K562 (cell line): ENCODE measurements at regions of chr1 and their contacts with region 1.

Region 1: GRCh38 chr1:109984456-109985275 is at the start of gene AHCYL1:
- DNase-seq: peak; percentile 100
- ATAC-seq: peak; percentile 97
- H3K4me3 ChIP-seq: peak within 1 kb of the TSS; percentile 86
- H3K27ac ChIP-seq: peak within 1 kb of the TSS; percentile 91
- H3K4me1 ChIP-seq: peaks cover 26 to 46% of the 10 kb centered on the region in 2 experiments
- H3K27me3 ChIP-seq: no peaks in the 10 kb centered on the region
- CTCF ChIP-seq: peak; percentile 96 to 99 (median 99)
- EP300 ChIP-seq: no peak; the same call in 1 of the 2 replicates
- POLR2A ChIP-seq: peak; percentile 95
- RAD21 ChIP-seq: peak; percentile 100
- polyA plus RNA-seq, gene AHCYL1: 27.3 to 32.9 TPM

Region 2: GRCh38 chr1:109548321-109549267 is 436.1 kb before region 1 on chr1 and contains the start of gene GNAI3:
- CTCF ChIA-PET with region 1: interaction called, 8 read pairs
- POLR2A ChIA-PET with region 1: interaction called, 8 read pairs
- in situ Hi-C with region 1: loop called (anchors 5 kb)
- intact Hi-C with region 1: loop called (anchors 5 kb)
- DNase-seq: peak; percentile 92 to 99 (median 94)
- ATAC-seq: peak; percentile 96
- H3K4me3 ChIP-seq: peak within 1 kb of the TSS; percentile 94
- H3K27ac ChIP-seq: peak within 1 kb of the TSS; percentile 91
- H3K4me1 ChIP-seq: peaks cover 4 to 5% of the 10 kb centered on the region in 2 experiments
- H3K27me3 ChIP-seq: no peaks in the 10 kb centered on the region
- CTCF ChIP-seq: no peak; a peak in 1 of 6 replicates
- EP300 ChIP-seq: no peak
- POLR2A ChIP-seq: peak; percentile 98
- RAD21 ChIP-seq: no peak; a peak in 2 of 4 replicates
- polyA plus RNA-seq, gene GNAI3: 6.9 to 8.0 TPM

Region 3: DNA sequence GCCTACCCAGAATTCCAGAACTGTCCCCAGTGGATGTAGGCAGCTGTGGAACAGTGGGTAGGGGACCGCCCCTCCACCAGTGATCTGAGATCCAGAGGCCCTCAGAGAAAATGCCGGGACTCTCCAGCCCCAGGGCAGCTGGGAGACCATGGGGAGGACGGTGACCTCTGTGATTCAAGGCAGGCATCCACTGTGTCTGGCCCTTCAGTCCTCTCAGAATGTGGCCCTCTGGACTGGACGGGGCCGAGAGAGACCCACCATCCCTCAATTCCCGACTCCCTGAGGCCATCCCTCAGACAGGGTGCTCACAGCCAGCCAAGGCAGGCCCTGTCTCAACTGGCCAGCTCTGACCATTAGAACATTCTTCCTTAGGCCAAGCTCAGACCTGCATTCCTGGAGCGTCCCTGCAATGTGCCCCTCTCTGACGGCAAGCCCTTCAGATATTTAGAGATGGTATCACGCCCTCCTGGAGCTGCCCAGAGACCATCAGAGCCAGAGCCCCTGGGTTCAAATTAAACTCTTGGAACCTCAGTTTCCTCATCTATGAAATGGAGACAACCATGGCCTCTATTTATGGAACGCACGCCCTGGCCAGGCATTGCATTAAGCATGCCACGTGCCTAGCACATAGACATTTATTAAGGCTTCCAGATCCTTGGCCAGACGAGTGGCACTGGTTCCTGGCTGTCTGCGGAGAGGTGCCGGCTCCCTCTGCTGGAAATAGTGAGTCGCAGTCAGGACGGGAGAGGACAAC is 211.3 kb before region 1 on chr1:
- CTCF ChIA-PET with region 1: interaction called, 202 read pairs
- POLR2A ChIA-PET with region 1: interaction called, 99 read pairs
- in situ Hi-C with region 1: loop called (anchors 5 kb)
- intact Hi-C with region 1: loop called (anchors 1 kb)
- DNase-seq: peak; percentile 67 to 90 (median 76)
- ATAC-seq: peak; percentile 95
- H3K4me3 ChIP-seq: no peak overlapping the region
- H3K27ac ChIP-seq: no peak overlapping the region
- H3K4me1 ChIP-seq: peaks cover 11 to 12% of the 10 kb centered on the region in 2 experiments; a peak in 3 of 5 replicates
- H3K27me3 ChIP-seq: peaks cover 2 to 23% of the 10 kb centered on the region in 2 experiments; a peak in 3 of 5 replicates
- CTCF ChIP-seq: peak; percentile 97 to 99 (median 98)
- EP300 ChIP-seq: no peak
- POLR2A ChIP-seq: no peak
- RAD21 ChIP-seq: peak; percentile 100

Region 4: DNA sequence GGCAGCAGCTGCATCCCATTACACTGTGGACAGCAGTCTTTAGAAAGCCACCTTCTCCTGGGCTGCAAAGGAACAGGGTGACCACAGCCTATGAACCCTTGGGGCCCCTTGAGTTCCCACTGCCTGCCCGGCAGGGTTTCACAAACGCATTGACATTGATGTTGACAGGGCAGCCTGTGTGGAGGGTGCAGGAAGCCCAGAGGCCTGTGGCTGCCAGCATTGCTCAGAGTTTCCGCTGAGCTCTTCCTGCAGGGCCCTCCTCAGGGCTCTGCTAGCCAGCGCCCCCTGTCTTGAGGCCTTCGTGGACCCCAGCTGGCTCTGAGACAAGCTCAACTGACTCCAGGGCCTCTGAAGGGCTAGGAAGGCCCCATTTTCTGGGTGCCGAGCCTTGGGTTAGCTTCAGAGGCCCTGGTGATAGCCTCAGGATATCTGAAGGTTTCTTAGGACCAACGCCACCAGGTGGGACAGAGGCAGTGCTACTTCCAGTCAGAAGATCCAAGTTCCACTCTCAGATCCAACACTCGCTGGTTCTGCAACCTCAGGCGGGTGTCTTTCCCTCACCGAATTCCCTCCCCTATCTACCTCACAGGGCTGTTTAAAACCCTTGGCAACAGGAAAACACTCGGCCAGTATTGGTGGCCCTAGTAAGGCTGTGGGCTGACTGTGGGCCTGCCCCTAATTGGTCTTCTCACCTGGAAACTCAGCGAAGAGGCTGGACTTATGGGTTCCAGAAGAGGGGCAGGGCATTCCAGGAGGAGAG is 193.8 kb before region 1 on chr1:
- CTCF ChIA-PET with region 1: interaction called, 4 read pairs
- POLR2A ChIA-PET with region 1: interaction called, 8 read pairs
- in situ Hi-C with region 1: no loop called
- intact Hi-C with region 1: loop called (anchors 1 kb)
- DNase-seq: peak; percentile 66 to 80 (median 74)
- ATAC-seq: peak; percentile 62
- H3K4me3 ChIP-seq: no peak overlapping the region
- H3K27ac ChIP-seq: peak overlapping the region; percentile 26; the same call in 2 of the 3 replicates
- H3K4me1 ChIP-seq: peaks cover 65 to 66% of the 10 kb centered on the region in 2 experiments
- H3K27me3 ChIP-seq: no peaks in the 10 kb centered on the region
- CTCF ChIP-seq: peak; percentile 70 to 85 (median 75)
- EP300 ChIP-seq: no peak
- POLR2A ChIP-seq: no peak
- RAD21 ChIP-seq: peak; percentile 62 to 67

Region 5: GRCh38 chr1:109910123-109910962 is 74.3 kb before region 1 on chr1 and contains the start of gene CSF1:
- CTCF ChIA-PET with region 1: interaction called, 3 read pairs
- POLR2A ChIA-PET with region 1: interaction called, 10 read pairs
- in situ Hi-C with region 1: loop called (anchors 5 kb)
- intact Hi-C with region 1: no loop called
- DNase-seq: peak; percentile 85 to 92 (median 90)
- ATAC-seq: peak; percentile 82
- H3K4me3 ChIP-seq: peak within 1 kb of the TSS; percentile 52
- H3K27ac ChIP-seq: peak within 1 kb of the TSS; percentile 64
- H3K4me1 ChIP-seq: peaks cover 30 to 37% of the 10 kb centered on the region in 2 experiments
- H3K27me3 ChIP-seq: no peaks in the 10 kb centered on the region
- CTCF ChIP-seq: no peak
- EP300 ChIP-seq: 0 out of 2 replicates have a peak, but pooled peaks have one; percentile 17
- POLR2A ChIP-seq: peak; percentile 60
- RAD21 ChIP-seq: no peak; a peak in 1 of 4 replicates
- polyA plus RNA-seq, gene CSF1: 0.18 to 0.23 TPM

Region 6: GRCh38 chr1:109931189-109931731 is 53.4 kb before region 1 on chr1:
- CTCF ChIA-PET with region 1: no interaction called
- POLR2A ChIA-PET with region 1: interaction called, 3 read pairs
- in situ Hi-C with region 1: no loop called
- intact Hi-C with region 1: loop called (anchors 5 kb)
- DNase-seq: peak; percentile 67 to 90 (median 82)
- ATAC-seq: peak; percentile 97
- H3K4me3 ChIP-seq: no peak overlapping the region
- H3K27ac ChIP-seq: peak overlapping the region; percentile 67; the same call in 2 of the 3 replicates
- H3K4me1 ChIP-seq: peaks cover 15 to 24% of the 10 kb centered on the region in 2 experiments; a peak in 4 of 5 replicates
- H3K27me3 ChIP-seq: no peaks in the 10 kb centered on the region
- CTCF ChIP-seq: no peak
- EP300 ChIP-seq: peak; percentile 49
- POLR2A ChIP-seq: 0 out of 2 replicates have a peak, but pooled peaks have one; percentile 24
- RAD21 ChIP-seq: peak in 1 of 2 experiments; percentile 29; a peak in 1 of 4 replicates

Region 7: GRCh38 chr1:110011527-110012041 is 26.9 kb after region 1 on chr1:
- CTCF ChIA-PET with region 1: interaction called, 3 read pairs
- POLR2A ChIA-PET with region 1: interaction called, 4 read pairs
- in situ Hi-C with region 1: no loop called
- intact Hi-C with region 1: loop called (anchors 1 kb)
- DNase-seq: peak; percentile 56 to 70 (median 62)
- ATAC-seq: peak; percentile 97
- H3K4me3 ChIP-seq: no peak overlapping the region
- H3K27ac ChIP-seq: no peak overlapping the region
- H3K4me1 ChIP-seq: no peaks in the 10 kb centered on the region
- H3K27me3 ChIP-seq: no peaks in the 10 kb centered on the region
- CTCF ChIP-seq: peak; percentile 65 to 79 (median 68)
- EP300 ChIP-seq: no peak
- POLR2A ChIP-seq: no peak
- RAD21 ChIP-seq: peak; percentile 69 to 85

Region 8: GRCh38 chr1:110645821-110646735 is 661.4 kb after region 1 on chr1:
- CTCF ChIA-PET with region 1: no interaction called
- POLR2A ChIA-PET with region 1: no interaction called
- in situ Hi-C with region 1: no loop called
- intact Hi-C with region 1: no loop called
- DNase-seq: no peak
- ATAC-seq: no peak
- H3K4me3 ChIP-seq: no peak overlapping the region
- H3K27ac ChIP-seq: no peak overlapping the region
- H3K4me1 ChIP-seq: no peaks in the 10 kb centered on the region
- H3K27me3 ChIP-seq: peaks cover 0 to 5% of the 10 kb centered on the region in 2 experiments; a peak in 2 of 5 replicates
- CTCF ChIP-seq: no peak
- EP300 ChIP-seq: no peak
- POLR2A ChIP-seq: no peak
- RAD21 ChIP-seq: no peak